Activated B cell treated with CpG ODN at 0.5 μM for 24 hours (primary cell): ENCODE measurements at regions of chrX and their contacts with region 1.

Region 1: DNA sequence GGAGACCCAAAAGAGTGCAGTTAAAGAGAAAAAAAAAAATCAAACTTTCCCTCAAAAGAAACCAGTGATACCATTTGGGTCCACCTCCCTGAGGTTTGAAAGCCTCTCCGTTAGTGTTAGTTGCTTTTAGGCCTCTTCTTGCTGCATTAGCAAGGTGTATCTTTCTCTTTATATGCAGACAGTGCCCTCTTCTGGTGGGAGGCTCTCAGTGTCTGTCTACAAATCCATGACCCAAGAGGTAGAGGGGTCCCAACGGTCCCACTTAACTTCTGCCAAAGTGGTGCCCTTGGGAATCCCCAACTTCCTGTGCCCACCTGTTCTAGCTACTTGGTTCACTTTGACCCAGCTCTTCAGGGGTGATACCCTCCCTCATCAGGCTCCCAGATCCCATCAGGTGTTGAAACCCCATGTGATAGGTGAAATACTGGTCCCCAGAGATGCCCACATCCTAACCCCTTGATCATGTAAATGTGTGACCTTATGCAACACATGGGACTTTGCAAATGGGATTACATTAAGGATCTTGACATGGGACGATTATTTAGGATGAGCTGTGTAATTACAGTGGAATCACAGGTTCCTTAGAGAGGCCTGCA is 63.7 kb upstream of the CD99 start:
- DNase-seq: no peak
- ATAC-seq: peak; percentile 33
- H3K4me3 Mint-ChIP-seq: no peak overlapping the region
- H3K27ac Mint-ChIP-seq: peak overlapping the region; percentile 30
- H3K4me1 Mint-ChIP-seq: peaks cover 43% of the 10 kb centered on the region
- H3K27me3 Mint-ChIP-seq: no peaks in the 10 kb centered on the region
- CTCF ChIP-seq: no peak

Region 2: GRCh38 chrX:1246816-1247215 is 1380.6 kb before region 1 on chrX:
- CTCF ChIA-PET with region 1: no interaction called
- POLR2A ChIA-PET with region 1: no interaction called
- intact Hi-C with region 1: loop called (anchors 1 kb)
- DNase-seq: peak; percentile 71
- ATAC-seq: peak; percentile 65
- H3K4me3 Mint-ChIP-seq: no peak overlapping the region
- H3K27ac Mint-ChIP-seq: no peak overlapping the region
- H3K4me1 Mint-ChIP-seq: peaks cover 22% of the 10 kb centered on the region
- H3K27me3 Mint-ChIP-seq: peaks cover 5% of the 10 kb centered on the region
- CTCF ChIP-seq: no peak

Region 3: DNA sequence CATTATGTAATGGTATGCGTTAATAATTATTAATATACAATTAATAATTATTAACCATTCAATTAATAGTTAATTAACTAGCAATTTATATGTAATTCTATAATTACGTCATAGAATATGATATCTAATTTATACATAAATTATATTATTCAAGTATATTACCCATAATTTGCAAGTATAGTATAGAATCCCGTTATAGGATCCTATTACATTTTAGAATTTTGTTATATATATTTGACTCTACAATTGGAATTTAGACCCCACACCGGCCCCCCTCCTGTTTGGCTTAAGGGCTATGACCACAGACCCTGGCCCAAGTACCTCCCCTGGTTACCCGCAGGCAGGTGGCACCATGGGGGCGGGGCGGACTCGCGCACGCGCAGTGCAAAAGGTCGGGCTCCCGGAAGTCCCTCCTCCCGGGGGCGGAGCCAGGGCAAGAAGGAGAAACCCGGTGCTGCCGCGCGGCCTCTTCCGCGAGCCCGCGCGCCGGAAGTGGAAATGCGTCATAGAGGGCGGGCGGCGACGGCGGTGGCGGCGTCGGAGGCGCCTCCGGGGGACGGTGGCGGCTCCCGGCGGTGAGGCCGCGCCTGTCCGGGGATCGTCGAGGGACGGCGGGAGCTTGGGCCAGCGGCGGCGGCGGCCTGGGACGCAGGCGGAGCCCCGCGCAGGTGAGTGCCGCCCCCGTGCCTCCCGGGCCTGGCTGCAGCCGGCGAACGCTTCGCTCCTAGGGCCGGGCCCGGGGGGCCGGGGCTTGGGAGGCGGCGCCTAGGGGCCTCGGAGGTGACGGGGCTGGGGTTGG is 1036.1 kb before region 1 on chrX and contains the start of gene AKAP17A:
- CTCF ChIA-PET with region 1: no interaction called
- POLR2A ChIA-PET with region 1: no interaction called
- intact Hi-C with region 1: loop called (anchors 1 kb)
- DNase-seq: peak; percentile 100
- ATAC-seq: peak; percentile 84
- H3K4me3 Mint-ChIP-seq: peak within 1 kb of the TSS; percentile 91
- H3K27ac Mint-ChIP-seq: peak within 1 kb of the TSS; percentile 83
- H3K4me1 Mint-ChIP-seq: peaks cover 51% of the 10 kb centered on the region
- H3K27me3 Mint-ChIP-seq: no peaks in the 10 kb centered on the region
- CTCF ChIP-seq: no peak
- total RNA-seq, gene AKAP17A: 75.7 and 84.7 TPM in 2 replicates

Region 4: DNA sequence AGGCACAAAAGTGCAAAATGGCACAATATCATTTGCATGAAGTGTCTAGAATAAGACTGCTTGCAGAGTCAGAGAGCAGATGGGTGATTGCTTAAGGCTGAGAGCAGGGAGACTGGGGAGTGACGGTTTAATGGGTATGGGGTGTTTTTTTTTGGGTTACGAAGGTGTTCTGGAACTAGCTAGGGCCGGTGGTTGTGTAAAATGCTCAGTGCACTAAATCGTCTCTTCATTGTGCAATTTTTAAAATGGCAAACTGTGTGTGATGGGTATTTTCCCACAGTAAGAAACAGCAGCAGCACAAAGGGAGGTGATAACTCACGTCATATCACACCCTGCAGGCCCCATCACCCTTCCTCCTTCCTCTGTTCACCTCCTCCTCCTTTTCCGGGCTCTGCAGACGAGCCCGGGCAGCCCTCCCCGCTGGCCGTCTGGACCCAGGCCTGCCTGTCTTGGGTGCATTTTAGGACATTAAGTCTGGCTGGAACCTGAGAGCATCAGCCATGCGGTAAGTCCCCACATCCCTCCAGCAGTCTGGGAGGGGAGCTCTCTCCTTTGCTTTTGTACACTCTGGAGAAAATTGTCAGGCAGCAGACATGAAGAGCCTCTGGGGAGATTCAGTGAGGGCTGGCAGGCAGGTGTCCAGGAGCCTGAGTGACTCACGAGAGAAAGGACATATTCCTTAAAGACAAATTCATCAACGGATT is 969.9 kb before region 1 on chrX:
- CTCF ChIA-PET with region 1: no interaction called
- POLR2A ChIA-PET with region 1: no interaction called
- intact Hi-C with region 1: loop called (anchors 1 kb)
- DNase-seq: peak; percentile 18
- ATAC-seq: no peak
- H3K4me3 Mint-ChIP-seq: peak overlapping the region; percentile 80
- H3K27ac Mint-ChIP-seq: peak overlapping the region; percentile 81
- H3K4me1 Mint-ChIP-seq: peaks cover 27% of the 10 kb centered on the region
- H3K27me3 Mint-ChIP-seq: no peaks in the 10 kb centered on the region
- CTCF ChIP-seq: no peak

Region 5: DNA sequence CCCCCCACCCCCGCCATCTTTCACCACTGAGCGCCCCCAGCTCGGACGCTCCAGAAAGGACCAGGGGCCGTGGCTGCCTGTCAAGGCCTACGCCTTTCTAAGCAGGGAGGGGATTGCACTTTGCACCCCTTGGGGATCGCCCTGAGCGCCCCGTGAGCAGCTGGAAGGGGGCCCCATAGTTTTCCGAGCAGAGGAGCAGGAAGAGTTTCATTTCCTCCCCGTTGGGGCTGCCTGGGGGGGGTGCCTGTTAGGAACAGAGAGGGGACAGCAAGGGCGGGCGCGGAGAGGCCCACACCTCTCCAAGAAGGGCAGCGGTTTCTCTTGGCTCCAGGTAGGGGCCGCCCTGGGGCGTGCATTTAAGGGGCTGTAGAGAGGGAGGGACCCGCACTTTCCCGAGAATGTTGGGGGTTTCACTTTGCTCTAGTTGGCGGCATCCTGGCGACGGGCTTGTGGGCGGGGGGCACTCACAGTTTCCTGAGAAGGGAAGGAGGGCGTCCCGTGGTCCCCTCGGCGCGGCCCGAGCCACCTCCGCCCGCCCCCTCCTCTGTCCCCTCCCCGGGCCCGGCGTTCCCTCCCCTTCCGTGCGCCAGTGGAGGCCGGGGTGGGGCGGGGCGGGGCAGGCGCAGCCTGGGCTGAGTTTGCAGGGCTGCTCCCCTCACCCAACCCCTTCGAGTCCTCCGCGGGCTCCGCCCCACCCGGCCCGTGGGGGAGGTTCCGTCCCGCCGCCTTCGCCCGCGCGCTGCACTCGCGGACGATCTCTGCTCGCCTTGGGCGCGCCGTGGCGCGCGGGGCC is 18.5 kb before region 1 on chrX:
- CTCF ChIA-PET with region 1: no interaction called
- POLR2A ChIA-PET with region 1: no interaction called
- intact Hi-C with region 1: loop called (anchors 1 kb)
- DNase-seq: peak; percentile 84
- ATAC-seq: peak; percentile 97
- H3K4me3 Mint-ChIP-seq: peak overlapping the region; percentile 93
- H3K27ac Mint-ChIP-seq: peak overlapping the region; percentile 81
- H3K4me1 Mint-ChIP-seq: peaks cover 36% of the 10 kb centered on the region
- H3K27me3 Mint-ChIP-seq: no peaks in the 10 kb centered on the region
- CTCF ChIP-seq: no peak

Region 6: DNA sequence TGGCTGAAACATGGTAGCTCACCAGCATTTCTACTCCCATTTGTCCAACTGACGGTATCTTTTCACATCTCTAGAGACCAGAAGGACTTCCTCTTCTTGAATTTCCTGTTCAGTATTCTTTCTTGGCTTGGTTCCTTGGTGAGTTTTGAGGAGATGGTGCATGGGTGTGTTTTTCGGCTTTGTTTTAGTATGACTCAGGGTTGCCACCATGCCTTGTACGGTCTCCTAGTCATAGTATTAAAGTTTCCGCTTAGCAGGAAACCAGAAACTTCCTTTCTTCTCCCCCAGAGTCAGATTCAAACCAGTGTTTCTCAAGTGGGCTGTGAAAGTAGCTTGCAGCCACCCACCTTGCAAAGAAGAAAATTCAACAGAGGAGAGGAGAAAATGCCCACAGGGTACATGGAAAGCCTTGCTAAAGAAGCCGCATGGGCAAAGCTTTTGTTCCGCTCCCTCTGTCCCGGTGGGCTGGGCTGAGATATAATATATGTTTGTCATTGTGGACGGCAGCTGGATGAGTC is 69.4 kb after region 1 on chrX:
- CTCF ChIA-PET with region 1: no interaction called
- POLR2A ChIA-PET with region 1: no interaction called
- intact Hi-C with region 1: loop called (anchors 1 kb)
- DNase-seq: no peak
- ATAC-seq: peak; percentile 83
- H3K4me3 Mint-ChIP-seq: peak overlapping the region; percentile 61
- H3K27ac Mint-ChIP-seq: peak overlapping the region; percentile 83
- H3K4me1 Mint-ChIP-seq: peaks cover 98% of the 10 kb centered on the region
- H3K27me3 Mint-ChIP-seq: no peaks in the 10 kb centered on the region
- CTCF ChIP-seq: no peak